ENCODE measurements at regions of chr9 and their contacts with region 1.

Region 1: DNA sequence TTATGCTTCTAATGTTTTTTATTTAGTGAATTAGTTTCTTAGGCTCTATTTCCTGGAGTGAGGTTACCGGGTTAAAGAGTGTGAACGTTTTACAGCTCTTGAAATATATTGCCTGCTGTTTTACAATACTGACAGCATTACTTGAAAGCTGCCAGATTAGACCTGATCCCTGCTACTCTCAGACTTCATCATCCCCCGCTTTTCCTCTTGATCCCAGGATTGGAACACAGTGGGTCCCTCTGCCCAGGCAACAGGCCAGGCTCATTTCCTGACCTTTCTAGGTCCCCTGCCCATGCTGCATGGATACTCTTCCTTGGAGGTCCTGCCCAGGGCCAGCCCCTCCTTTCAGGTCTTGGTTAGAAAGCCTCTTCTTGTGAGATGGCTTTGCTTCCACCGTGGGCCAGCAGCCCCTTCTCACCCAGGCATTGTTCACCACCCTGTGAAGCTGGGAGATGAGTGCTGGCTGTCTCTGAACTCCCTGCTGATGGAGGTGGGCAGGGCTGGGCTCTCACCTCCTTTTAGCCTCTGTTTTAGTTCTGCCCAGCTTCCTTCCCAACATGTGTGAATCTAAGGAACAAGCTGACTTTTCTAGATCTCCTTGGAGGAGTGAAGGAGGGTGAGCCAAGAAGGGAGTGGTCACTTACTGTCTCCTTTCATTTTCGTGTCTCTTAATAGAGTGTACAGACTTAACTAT is 15.5 kb upstream of the FAM120AOS start:
- DNase-seq: no peak
- H3K4me3 Mint-ChIP-seq: no peak overlapping the region
- H3K27ac Mint-ChIP-seq: peak overlapping the region; percentile 50
- H3K4me1 Mint-ChIP-seq: peaks cover 72% of the 10 kb centered on the region
- H3K27me3 Mint-ChIP-seq: no peaks in the 10 kb centered on the region

Region 2: GRCh38 chr9:93440896-93441721 is 27.8 kb before region 1 on chr9:
- CTCF ChIA-PET with region 1: no interaction called
- POLR2A ChIA-PET with region 1: no interaction called
- DNase-seq: no peak
- H3K4me3 Mint-ChIP-seq: no peak overlapping the region
- H3K27ac Mint-ChIP-seq: no peak overlapping the region
- H3K4me1 Mint-ChIP-seq: no peaks in the 10 kb centered on the region
- H3K27me3 Mint-ChIP-seq: no peaks in the 10 kb centered on the region

Region 3: DNA sequence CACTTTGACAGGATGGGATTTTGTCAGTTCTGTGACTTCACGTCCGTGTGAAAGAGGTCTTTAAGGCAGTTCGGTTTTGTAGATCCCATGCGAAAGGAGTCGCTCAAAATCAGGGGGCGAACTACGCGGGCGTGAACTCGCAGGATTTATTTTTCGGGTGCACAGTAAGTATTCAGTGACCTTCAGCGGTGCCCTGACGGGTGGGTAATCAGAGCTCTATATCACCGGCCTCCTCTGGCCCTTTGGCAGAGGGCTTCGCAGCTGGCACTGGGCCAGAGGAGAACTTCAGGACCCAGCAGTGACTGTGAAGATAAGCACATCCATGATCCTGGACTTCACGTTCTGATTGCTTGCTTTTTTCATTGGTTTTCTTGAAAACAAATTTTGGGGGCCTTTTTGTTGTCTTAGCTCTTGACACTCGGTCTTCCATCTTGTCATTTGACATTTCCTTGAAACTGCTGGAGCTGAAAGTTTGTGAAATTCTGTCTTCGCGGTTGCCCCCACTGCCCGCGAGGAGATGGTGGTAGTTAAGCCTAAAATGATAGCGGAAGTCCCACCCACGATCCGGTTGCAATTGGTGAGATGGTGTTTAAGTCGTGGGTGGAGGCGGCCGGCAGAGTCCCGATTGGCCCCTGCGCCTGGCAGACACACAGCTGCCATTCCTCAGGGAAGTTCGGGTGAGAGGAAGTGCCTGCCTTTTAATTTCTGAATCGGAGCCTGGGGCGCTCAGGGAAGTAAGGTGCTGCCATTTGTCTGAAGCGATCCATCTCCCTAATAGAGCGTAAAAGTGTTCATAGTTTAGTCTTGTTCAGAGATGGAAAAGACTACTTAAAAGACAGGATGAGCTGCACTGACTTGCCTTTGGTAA is 15.6 kb before region 1 on chr9 and contains the start of gene FAM120AOS:
- CTCF ChIA-PET with region 1: interaction called, 20 read pairs
- POLR2A ChIA-PET with region 1: interaction called, 160 read pairs
- DNase-seq: peak; percentile 88
- H3K4me3 Mint-ChIP-seq: peak within 1 kb of the TSS; percentile 91
- H3K27ac Mint-ChIP-seq: peak within 1 kb of the TSS; percentile 92
- H3K4me1 Mint-ChIP-seq: peaks cover 55% of the 10 kb centered on the region
- H3K27me3 Mint-ChIP-seq: no peaks in the 10 kb centered on the region
- total RNA-seq, gene FAM120AOS: 41.4 to 43.1 TPM